Posterior vena cava (tissue), 2 donors: ENCODE measurements at regions of chr4 and their contacts with region 1.

Region 1: DNA sequence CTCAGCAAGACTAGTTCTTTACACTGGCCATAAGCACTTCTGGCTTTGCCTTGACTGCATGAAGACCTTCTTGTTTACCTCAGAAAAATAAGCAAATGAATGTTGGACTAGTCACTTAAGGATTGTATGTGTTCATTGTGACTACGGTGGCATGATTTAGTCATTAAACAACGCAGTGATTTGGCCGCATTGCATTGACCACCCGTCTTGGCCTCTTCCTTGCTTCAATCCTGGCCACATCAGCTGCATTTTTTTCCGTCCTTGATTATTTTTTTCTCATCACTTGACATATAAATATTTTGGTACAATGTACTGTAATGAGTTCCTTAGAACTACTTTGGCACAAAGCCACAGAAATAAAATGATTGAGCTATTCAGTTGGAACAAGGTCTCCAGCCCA is 656.2 kb downstream of the RAB28 start:
- DNase-seq: no peak

Region 2: GRCh38 chr4:12416755-12417154 is 411.2 kb before region 1 on chr4:
- intact Hi-C with region 1: loop called in 1 of 2 experiments (anchors 5 kb)
- DNase-seq: no peak

Region 3: GRCh38 chr4:12852338-12853307 is 24.7 kb after region 1 on chr4:
- intact Hi-C with region 1: no loop called
- DNase-seq: no peak